Activated CD4-positive, alpha-beta T cell treated with anti-CD3 and anti-CD28 coated beads for 36 hours (primary cell): ENCODE measurements at regions of chr4 and their contacts with region 1.

Region 1: DNA sequence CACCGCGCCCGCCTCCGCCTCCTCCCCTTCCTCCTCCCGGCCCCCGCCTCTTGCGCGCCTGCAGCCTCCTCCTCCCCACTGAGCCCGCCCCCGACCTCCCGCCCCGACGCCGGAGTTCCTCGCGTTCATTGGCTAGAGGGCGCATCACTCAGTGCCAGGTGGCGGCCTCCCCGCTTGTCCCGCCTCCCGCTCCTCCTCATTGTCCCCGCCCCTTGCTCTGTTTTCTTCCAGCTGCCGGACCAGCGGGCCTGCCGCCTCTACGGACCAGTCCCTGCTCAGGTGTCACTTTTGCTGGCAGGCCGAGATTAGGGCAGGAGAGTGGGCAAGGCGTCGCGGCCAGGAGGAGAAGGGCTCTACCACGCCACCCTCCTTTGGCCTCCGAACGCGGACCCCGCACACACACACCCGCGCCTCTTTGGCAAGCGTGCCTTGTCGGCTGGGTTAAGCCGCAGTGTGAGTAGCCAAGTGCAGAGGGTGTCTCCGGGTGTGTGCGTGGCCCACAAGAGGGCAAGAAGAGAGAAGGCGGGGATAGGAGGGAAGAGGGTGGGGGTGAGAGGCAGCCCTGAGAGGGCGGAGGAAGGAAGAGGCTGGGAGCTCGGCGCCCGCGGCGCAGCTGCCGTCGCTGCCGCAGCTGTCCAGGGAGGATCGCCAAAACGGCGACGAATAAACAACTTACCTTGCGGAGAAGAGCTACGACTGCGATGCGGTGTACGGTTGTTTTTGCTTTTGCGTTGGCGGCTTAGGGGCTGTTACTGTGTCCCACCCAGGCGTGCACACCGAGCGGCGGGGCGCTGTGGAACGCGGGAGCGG is 436 bp upstream of the PPP3CA start:
- DNase-seq: peak; percentile 99
- ATAC-seq: peak; percentile 95
- H3K4me3 Mint-ChIP-seq: peak overlapping the region; percentile 90
- H3K27ac Mint-ChIP-seq: peak overlapping the region; percentile 77
- H3K4me1 Mint-ChIP-seq: peaks cover 28% of the 10 kb centered on the region
- H3K27me3 Mint-ChIP-seq: peaks cover 22% of the 10 kb centered on the region

Region 2: GRCh38 chr4:100093091-100093866 is 1254.5 kb before region 1 on chr4:
- CTCF ChIA-PET with region 1: no interaction called
- POLR2A ChIA-PET with region 1: no interaction called
- intact Hi-C with region 1: loop called (anchors 1 to 2 kb)
- DNase-seq: peak; percentile 94
- ATAC-seq: peak; percentile 94
- H3K4me3 Mint-ChIP-seq: peak overlapping the region; percentile 33
- H3K27ac Mint-ChIP-seq: peak overlapping the region; percentile 94
- H3K4me1 Mint-ChIP-seq: peaks cover 56% of the 10 kb centered on the region
- H3K27me3 Mint-ChIP-seq: peaks cover 1% of the 10 kb centered on the region

Region 3: GRCh38 chr4:100591161-100591876 is 756.4 kb before region 1 on chr4:
- CTCF ChIA-PET with region 1: no interaction called
- POLR2A ChIA-PET with region 1: no interaction called
- intact Hi-C with region 1: no loop called
- DNase-seq: no peak
- ATAC-seq: no peak
- H3K4me3 Mint-ChIP-seq: no peak overlapping the region
- H3K27ac Mint-ChIP-seq: no peak overlapping the region
- H3K4me1 Mint-ChIP-seq: peaks cover 9% of the 10 kb centered on the region
- H3K27me3 Mint-ChIP-seq: peaks cover 2% of the 10 kb centered on the region

Region 4: DNA sequence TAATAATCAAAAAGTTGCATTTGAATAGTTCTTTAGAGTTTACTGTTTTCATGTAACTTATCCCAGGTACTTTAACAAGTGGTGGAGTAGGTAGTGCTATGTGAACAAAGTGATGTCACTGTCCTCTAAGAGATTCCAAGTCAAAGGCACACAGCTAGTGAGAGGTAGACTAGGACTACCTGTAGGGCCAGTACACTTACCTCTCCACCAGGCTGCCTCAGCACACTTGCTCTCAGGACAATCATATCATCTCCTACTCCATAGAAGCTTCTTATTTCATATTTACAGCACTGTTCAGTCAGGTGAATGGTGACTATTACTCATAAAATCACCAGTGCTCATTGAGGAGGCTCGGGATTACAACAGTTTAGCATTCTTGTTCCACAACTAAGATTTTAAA is 657.0 kb before region 1 on chr4:
- CTCF ChIA-PET with region 1: no interaction called
- POLR2A ChIA-PET with region 1: no interaction called
- intact Hi-C with region 1: no loop called
- DNase-seq: no peak
- ATAC-seq: no peak
- H3K4me3 Mint-ChIP-seq: no peak overlapping the region
- H3K27ac Mint-ChIP-seq: no peak overlapping the region
- H3K4me1 Mint-ChIP-seq: no peaks in the 10 kb centered on the region
- H3K27me3 Mint-ChIP-seq: peaks cover 2% of the 10 kb centered on the region

Region 5: GRCh38 chr4:101169044-101170014 is 178.4 kb before region 1 on chr4:
- CTCF ChIA-PET with region 1: interaction called, 3 read pairs
- POLR2A ChIA-PET with region 1: no interaction called
- intact Hi-C with region 1: loop called in 1 of 2 experiments (anchors 2 kb)
- DNase-seq: peak; percentile 76
- ATAC-seq: peak; percentile 99
- H3K4me3 Mint-ChIP-seq: no peak overlapping the region
- H3K27ac Mint-ChIP-seq: no peak overlapping the region
- H3K4me1 Mint-ChIP-seq: peaks cover 2% of the 10 kb centered on the region
- H3K27me3 Mint-ChIP-seq: no peaks in the 10 kb centered on the region

Region 6: GRCh38 chr4:101306225-101306624 is 41.5 kb before region 1 on chr4:
- CTCF ChIA-PET with region 1: no interaction called
- POLR2A ChIA-PET with region 1: no interaction called
- intact Hi-C with region 1: loop called in 1 of 2 experiments (anchors 1 kb)
- DNase-seq: no peak
- ATAC-seq: peak; percentile 42
- H3K4me3 Mint-ChIP-seq: peak overlapping the region; percentile 36
- H3K27ac Mint-ChIP-seq: no peak overlapping the region
- H3K4me1 Mint-ChIP-seq: peaks cover 24% of the 10 kb centered on the region
- H3K27me3 Mint-ChIP-seq: no peaks in the 10 kb centered on the region

Region 7: GRCh38 chr4:101425829-101426228 is 78.1 kb after region 1 on chr4:
- CTCF ChIA-PET with region 1: no interaction called
- POLR2A ChIA-PET with region 1: no interaction called
- intact Hi-C with region 1: no loop called
- DNase-seq: no peak
- ATAC-seq: no peak
- H3K4me3 Mint-ChIP-seq: no peak overlapping the region
- H3K27ac Mint-ChIP-seq: no peak overlapping the region
- H3K4me1 Mint-ChIP-seq: no peaks in the 10 kb centered on the region
- H3K27me3 Mint-ChIP-seq: peaks cover 26% of the 10 kb centered on the region

Region 8: DNA sequence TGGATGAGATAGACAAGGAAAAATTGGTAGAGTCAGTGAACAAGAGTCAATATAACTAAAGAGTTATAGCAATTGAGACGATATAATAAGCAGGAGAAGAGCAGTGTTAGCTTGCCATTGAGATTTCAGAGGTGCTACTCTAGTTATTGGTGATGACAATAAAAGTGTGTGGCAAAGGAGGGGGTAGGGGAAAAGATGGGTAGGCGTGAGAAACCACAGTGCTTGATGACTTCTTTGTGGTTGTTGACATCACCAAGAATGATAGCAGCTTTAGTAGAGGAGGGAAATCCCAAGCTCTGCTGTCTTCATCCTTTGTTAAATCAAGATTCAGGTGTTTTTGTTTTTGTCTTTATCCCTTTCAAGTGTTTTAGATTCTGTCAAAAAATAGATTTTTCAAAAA is 179.4 kb after region 1 on chr4:
- CTCF ChIA-PET with region 1: interaction called, 3 read pairs
- POLR2A ChIA-PET with region 1: no interaction called
- intact Hi-C with region 1: loop called (anchors 1 to 5 kb)
- DNase-seq: peak; percentile 84
- ATAC-seq: peak; percentile 100
- H3K4me3 Mint-ChIP-seq: no peak overlapping the region
- H3K27ac Mint-ChIP-seq: no peak overlapping the region
- H3K4me1 Mint-ChIP-seq: peaks cover 19% of the 10 kb centered on the region
- H3K27me3 Mint-ChIP-seq: peaks cover 47% of the 10 kb centered on the region

Region 9: DNA sequence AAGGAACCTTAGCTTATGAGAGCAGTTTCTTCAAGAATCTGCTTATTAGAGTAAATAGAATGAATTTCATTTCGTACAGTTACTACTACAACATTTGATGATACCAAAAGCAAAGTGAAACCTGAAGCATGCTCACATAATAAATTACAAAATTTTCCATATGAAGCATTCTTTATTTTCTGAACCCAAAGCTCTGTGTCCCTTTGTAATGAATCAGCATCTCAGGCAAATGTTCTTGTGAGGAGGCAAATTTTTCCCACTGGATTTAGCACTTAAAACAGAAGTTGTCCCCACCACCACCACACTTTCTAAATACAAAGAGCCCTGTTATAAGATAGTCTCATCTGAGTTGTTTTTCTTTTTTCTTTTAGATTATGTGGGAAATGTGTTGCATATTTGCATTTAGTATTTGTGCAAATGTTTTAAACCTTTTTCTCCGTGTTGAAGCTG is 1082.7 kb after region 1 on chr4:
- CTCF ChIA-PET with region 1: interaction called, 4 read pairs
- POLR2A ChIA-PET with region 1: no interaction called
- intact Hi-C with region 1: loop called in 1 of 2 experiments (anchors 5 kb)
- DNase-seq: no peak
- ATAC-seq: no peak
- H3K4me3 Mint-ChIP-seq: peak overlapping the region; percentile 81
- H3K27ac Mint-ChIP-seq: peak overlapping the region; percentile 87
- H3K4me1 Mint-ChIP-seq: peaks cover 12% of the 10 kb centered on the region
- H3K27me3 Mint-ChIP-seq: peaks cover 5% of the 10 kb centered on the region